ENCODE measurements at regions of chr4 and their contacts with region 1.

Region 1: DNA sequence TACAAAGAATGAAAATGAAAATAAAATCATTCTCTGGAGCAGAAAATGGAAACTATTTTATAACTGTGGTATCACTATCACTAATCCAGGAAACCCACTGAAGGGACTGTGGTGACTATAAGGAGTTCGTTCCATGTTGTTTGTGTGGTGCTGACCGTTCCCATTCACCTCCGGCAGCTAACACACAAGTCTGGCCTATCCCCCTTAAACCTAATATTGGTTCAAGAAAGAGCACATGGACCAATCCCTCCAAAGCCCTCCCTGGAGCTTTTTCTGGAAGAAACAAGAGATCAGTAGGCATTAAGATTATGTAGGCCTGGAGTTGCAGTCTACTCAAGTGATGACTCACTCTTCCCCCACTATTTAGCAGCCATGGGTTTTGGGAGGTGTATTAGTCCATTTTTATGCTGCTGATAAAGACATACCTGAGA is 25.9 kb upstream of the FAM241A start:
- DNase-seq: peak; percentile 24
- ATAC-seq: peak; percentile 93
- H3K4me3 ChIP-seq: no peak overlapping the region
- H3K27ac ChIP-seq: peak overlapping the region; percentile 13; the same call in 1 of the 2 replicates
- H3K4me1 ChIP-seq: peaks cover 4% of the 10 kb centered on the region; the same call in 1 of the 2 replicates
- H3K27me3 ChIP-seq: no peaks in the 10 kb centered on the region; a peak in 1 of 4 replicates
- CTCF ChIP-seq: no peak
- EP300 ChIP-seq: no peak
- POLR2A ChIP-seq: no peak
- RAD21 ChIP-seq: no peak

Region 2: DNA sequence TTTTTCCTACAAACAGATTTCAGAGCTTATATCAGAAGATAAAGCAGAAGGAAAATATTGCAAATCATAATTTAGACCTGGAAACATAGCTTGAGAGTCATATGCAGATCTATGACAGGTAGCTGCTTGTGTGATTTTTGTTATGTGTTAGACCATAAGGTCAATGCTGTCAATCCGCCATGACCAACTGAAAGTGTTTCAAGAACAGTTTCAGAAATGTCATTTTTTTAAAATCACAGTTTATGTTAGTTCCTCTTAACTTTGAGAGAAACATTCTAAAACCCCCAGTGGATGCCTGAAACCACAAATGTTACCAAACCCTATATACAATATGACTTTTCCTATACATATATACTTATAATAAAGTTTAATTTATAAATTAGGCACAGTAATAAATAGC is 365.4 kb before region 1 on chr4:
- CTCF ChIA-PET with region 1: no interaction called
- POLR2A ChIA-PET with region 1: no interaction called
- RAD21 ChIA-PET with region 1: no interaction called
- SMC1A ChIA-PET with region 1: no interaction called
- in situ Hi-C with region 1: no loop called
- intact Hi-C with region 1: no loop called
- DNase-seq: no peak
- ATAC-seq: no peak
- H3K4me3 ChIP-seq: no peak overlapping the region
- H3K27ac ChIP-seq: no peak overlapping the region
- H3K4me1 ChIP-seq: no peaks in the 10 kb centered on the region
- H3K27me3 ChIP-seq: no peaks in the 10 kb centered on the region; a peak in 1 of 4 replicates
- CTCF ChIP-seq: no peak
- EP300 ChIP-seq: no peak
- POLR2A ChIP-seq: no peak
- RAD21 ChIP-seq: no peak

Region 3: GRCh38 chr4:112150920-112151319 is 31.6 kb after region 1 on chr4:
- CTCF ChIA-PET with region 1: interaction called, 3 read pairs
- POLR2A ChIA-PET with region 1: interaction called, 10 read pairs
- RAD21 ChIA-PET with region 1: no interaction called
- SMC1A ChIA-PET with region 1: interaction called, 3 read pairs
- in situ Hi-C with region 1: no loop called
- intact Hi-C with region 1: no loop called
- DNase-seq: no peak
- ATAC-seq: no peak
- H3K4me3 ChIP-seq: no peak overlapping the region
- H3K27ac ChIP-seq: no peak overlapping the region
- H3K4me1 ChIP-seq: no peaks in the 10 kb centered on the region
- H3K27me3 ChIP-seq: peaks cover 0 to 2% of the 10 kb centered on the region in 2 experiments; a peak in 2 of 4 replicates
- CTCF ChIP-seq: no peak
- EP300 ChIP-seq: no peak
- POLR2A ChIP-seq: no peak
- RAD21 ChIP-seq: no peak

Region 4: DNA sequence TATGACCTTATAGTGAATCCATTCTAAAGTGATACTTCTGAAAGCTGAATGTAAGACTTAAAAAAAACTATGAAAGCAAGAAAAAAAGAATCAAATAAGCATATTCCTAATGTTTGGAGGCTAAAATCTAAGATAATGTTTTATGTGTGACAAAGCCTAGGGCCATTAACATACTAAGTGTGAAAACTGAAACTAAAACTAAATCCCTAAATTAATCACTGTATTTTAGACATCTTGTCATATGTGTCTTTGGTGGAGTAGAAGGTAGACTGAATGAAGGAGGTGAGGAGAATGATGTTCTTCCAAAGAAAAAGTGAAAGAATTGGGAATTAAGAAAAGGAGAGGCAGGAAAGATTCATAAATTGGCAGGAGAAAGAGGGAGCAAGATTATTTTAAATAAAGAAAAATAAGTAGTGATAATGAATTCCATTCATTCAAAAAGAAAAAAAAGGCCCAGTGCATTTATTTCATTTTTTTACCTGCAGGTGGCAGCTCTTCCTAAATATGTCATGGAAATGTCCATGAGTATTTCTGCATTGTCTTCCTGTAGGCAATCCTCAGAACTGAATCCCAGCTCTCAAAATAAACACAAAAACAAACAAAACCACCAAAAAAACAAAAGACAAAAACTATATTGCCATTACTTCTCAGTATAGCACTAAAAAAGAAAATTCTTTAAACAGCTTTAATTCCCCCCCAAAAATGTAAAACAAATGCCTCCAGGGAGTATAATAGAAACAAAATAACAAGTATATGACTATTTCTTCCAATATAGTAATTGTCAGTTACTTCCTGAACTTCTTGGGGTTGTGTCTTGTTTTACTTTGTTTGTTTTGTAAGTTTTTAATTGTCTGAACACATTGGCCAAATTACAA is 95.3 kb after region 1 on chr4:
- CTCF ChIA-PET with region 1: no interaction called
- POLR2A ChIA-PET with region 1: no interaction called
- RAD21 ChIA-PET with region 1: no interaction called
- SMC1A ChIA-PET with region 1: no interaction called
- in situ Hi-C with region 1: no loop called
- intact Hi-C with region 1: no loop called
- DNase-seq: no peak
- ATAC-seq: peak; percentile 63; the same call in 2 of the 3 replicates
- H3K4me3 ChIP-seq: no peak overlapping the region
- H3K27ac ChIP-seq: no peak overlapping the region
- H3K4me1 ChIP-seq: no peaks in the 10 kb centered on the region
- H3K27me3 ChIP-seq: no peaks in the 10 kb centered on the region
- CTCF ChIP-seq: peak in 2 of 3 experiments; percentile 20 to 49; a peak in 4 of 6 replicates
- EP300 ChIP-seq: no peak
- POLR2A ChIP-seq: no peak
- RAD21 ChIP-seq: peak; percentile 46; the same call in 1 of the 2 replicates